Ovary (tissue), 10 donors: ENCODE measurements at regions of chr2 and their contacts with region 1.

Region 1: GRCh38 chr2:138373993-138374408 is 127.6 kb upstream of the SPOPL start:
- DNase-seq: peak in 1 of 5 donors; percentile 35
- H3K4me3 ChIP-seq: no peak overlapping the region
- H3K27ac ChIP-seq: no peak overlapping the region
- H3K4me1 ChIP-seq: no peaks in the 10 kb centered on the region
- H3K27me3 ChIP-seq: no peaks in the 10 kb centered on the region
- CTCF ChIP-seq: peak; percentile 32 to 72 (median 63)
- EP300 ChIP-seq: no peak
- POLR2A ChIP-seq: no peak

Region 2: GRCh38 chr2:137947728-137948336 is 426.2 kb before region 1 on chr2:
- intact Hi-C with region 1: loop called in 1 of 4 experiments (anchors 10 kb)
- DNase-seq: peak; percentile 62 to 82 (median 75)
- H3K4me3 ChIP-seq: no peak overlapping the region
- H3K27ac ChIP-seq: no peak overlapping the region
- H3K4me1 ChIP-seq: no peaks in the 10 kb centered on the region
- H3K27me3 ChIP-seq: no peaks in the 10 kb centered on the region
- CTCF ChIP-seq: peak in 2 of 3 donors; percentile 33 to 43
- EP300 ChIP-seq: no peak
- POLR2A ChIP-seq: no peak

Region 3: DNA sequence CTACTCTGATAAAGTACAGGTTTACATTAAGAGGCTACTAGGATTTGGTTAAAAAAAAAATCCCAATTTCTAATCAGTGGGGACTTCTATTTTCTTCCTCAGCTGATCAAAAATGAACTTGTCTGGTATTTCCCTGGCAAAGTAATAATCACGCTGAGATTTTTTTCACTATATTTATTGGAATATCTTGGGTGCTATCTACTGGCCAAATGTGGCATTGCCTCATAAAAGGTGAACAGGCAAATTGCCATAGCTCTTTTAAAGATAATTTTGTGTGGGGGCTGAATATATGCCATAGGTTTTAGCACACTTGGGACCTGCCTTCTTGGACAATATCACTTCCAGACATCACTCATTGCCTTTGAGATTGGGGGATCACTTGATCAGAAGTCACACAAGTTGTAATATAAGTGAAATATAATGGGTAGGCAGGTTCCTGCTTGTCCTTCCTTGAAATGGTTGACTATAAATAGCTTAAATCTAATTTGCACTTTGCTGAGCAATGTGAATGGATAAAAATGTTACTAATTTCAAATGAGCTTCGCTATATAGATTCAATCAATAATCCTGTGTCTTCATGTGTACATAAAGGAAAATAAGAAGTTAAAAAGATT is 413.2 kb after region 1 on chr2:
- intact Hi-C with region 1: loop called in 1 of 4 experiments (anchors 10 kb)
- DNase-seq: peak in 1 of 5 donors; percentile 25
- H3K4me3 ChIP-seq: no peak overlapping the region
- H3K27ac ChIP-seq: no peak overlapping the region
- H3K4me1 ChIP-seq: no peaks in the 10 kb centered on the region
- H3K27me3 ChIP-seq: no peaks in the 10 kb centered on the region
- CTCF ChIP-seq: peak; percentile 18 to 63 (median 39)
- EP300 ChIP-seq: no peak
- POLR2A ChIP-seq: no peak